Activated CD4-positive, alpha-beta memory T cell treated with anti-CD3 and anti-CD28 coated beads for 36 hours (primary cell): ENCODE measurements at regions of chr19 and their contacts with region 1.

Region 1: GRCh38 chr19:12400633-12401502 is at the start of gene ZNF799:
- DNase-seq: peak; percentile 93
- H3K4me3 Mint-ChIP-seq: peak within 1 kb of the TSS; percentile 90
- H3K27ac Mint-ChIP-seq: peak within 1 kb of the TSS; percentile 76
- H3K4me1 Mint-ChIP-seq: peaks cover 8% of the 10 kb centered on the region
- H3K27me3 Mint-ChIP-seq: no peaks in the 10 kb centered on the region
- total RNA-seq, gene ZNF799: 4.2 to 4.7 TPM

Region 2: DNA sequence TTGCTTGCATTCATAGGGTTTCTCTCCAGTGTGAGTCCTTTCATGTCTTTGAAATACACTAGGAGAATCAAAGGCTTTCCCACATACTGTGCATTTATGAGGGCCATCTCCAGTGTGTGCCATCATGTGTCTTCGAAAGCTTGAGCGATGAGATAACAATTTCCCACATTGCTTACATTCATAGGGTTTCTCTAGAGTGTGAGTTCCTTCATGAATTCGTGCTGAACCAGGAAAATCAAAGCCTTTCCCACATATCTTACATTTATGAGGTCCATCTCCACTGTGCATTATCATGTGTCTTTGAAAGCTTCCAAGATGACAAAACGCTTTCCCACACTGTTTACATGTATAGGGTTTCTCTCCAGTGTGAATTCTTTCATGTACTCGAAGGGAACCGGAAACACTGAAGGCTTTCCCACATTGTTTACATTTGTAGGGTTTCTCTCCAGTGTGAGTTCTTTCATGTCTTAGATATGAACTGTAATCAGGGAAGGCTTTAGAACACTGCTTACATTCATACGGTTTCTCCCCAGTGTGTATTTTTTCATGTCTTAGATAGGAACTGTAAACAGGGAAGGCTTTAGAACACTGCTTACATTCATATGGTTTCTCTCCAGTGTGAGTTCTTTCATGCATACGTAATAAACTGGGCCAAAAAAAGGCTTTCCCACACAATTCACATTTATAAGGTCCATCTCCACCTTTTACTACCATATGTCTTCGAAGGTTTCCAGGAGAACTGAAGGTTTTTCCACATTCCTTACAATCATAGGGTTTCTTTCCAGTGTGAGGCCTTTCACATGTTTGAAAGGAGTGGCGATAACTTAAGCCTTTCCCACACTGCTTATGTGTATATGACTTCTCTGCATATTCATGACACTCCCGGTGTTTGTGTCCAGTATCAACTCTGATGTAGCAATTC is 127.6 kb before region 1 on chr19:
- CTCF ChIA-PET with region 1: no interaction called
- POLR2A ChIA-PET with region 1: no interaction called
- intact Hi-C with region 1: no loop called
- DNase-seq: no peak
- H3K4me3 Mint-ChIP-seq: no peak overlapping the region
- H3K27ac Mint-ChIP-seq: no peak overlapping the region
- H3K4me1 Mint-ChIP-seq: peaks cover 4% of the 10 kb centered on the region
- H3K27me3 Mint-ChIP-seq: no peaks in the 10 kb centered on the region

Region 3: GRCh38 chr19:12294249-12295158 is 106.4 kb before region 1 on chr19 and contains the start of gene ZNF44:
- CTCF ChIA-PET with region 1: no interaction called
- POLR2A ChIA-PET with region 1: no interaction called
- intact Hi-C with region 1: loop called (anchors 1 kb)
- DNase-seq: peak; percentile 99
- H3K4me3 Mint-ChIP-seq: peak within 1 kb of the TSS; percentile 98
- H3K27ac Mint-ChIP-seq: peak within 1 kb of the TSS; percentile 98
- H3K4me1 Mint-ChIP-seq: peaks cover 27% of the 10 kb centered on the region
- H3K27me3 Mint-ChIP-seq: no peaks in the 10 kb centered on the region
- total RNA-seq, gene ZNF44: 7.5 to 8.9 TPM

Region 4: GRCh38 chr19:12365236-12366162 is 35.4 kb before region 1 on chr19 and contains the start of gene ZNF442:
- CTCF ChIA-PET with region 1: no interaction called
- POLR2A ChIA-PET with region 1: no interaction called
- intact Hi-C with region 1: loop called (anchors 1 kb)
- DNase-seq: peak; percentile 93
- H3K4me3 Mint-ChIP-seq: peak within 1 kb of the TSS; percentile 93
- H3K27ac Mint-ChIP-seq: peak within 1 kb of the TSS; percentile 65
- H3K4me1 Mint-ChIP-seq: peaks cover 16% of the 10 kb centered on the region
- H3K27me3 Mint-ChIP-seq: peaks cover 2% of the 10 kb centered on the region
- total RNA-seq, gene ZNF442: 2.3 TPM

Region 5: DNA sequence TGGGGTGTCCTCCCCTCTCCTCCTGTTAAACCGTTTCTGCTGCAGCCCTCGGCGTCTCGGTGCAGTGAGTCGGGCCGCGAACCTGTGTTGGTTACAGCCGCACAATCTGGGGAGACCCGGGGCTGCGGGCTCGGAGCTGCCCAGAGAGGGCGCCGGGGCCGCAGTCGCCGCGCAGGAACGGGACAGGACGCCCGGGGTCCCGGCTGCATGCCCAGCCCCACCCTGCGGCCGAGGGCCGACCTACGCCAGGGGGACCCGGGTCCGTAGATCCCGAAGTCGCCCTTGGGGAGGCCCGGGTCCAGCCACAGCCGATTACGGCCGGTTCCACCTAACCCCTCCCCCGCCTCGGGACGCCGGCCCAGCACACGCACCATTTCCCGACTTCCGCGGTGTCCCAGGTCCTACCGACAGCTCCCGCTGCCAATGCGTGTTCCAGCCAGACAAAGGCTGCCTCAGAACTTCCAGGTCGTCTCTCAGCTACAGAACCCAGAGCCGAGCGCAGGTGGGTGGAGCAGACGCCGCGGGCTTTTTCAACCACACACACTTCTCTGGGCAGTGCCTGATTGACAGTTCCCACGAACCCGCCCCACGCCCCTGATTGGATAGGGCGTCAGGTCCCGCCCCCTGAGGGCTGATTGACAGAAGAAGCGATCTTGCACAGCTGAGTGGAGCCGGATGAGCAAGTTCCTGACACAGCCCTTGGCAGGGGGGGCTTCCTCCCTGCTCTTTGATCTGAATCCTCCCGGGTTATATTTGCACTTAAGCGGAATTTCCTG is 39.9 kb after region 1 on chr19 and contains the start of gene ZNF443:
- CTCF ChIA-PET with region 1: interaction called, 4 read pairs
- POLR2A ChIA-PET with region 1: interaction called, 4 read pairs
- intact Hi-C with region 1: loop called (anchors 2 kb)
- DNase-seq: peak; percentile 100
- H3K4me3 Mint-ChIP-seq: peak within 1 kb of the TSS; percentile 97
- H3K27ac Mint-ChIP-seq: peak within 1 kb of the TSS; percentile 92
- H3K4me1 Mint-ChIP-seq: peaks cover 11% of the 10 kb centered on the region
- H3K27me3 Mint-ChIP-seq: no peaks in the 10 kb centered on the region
- total RNA-seq, gene ZNF443: 5.1 to 5.3 TPM

Region 6: GRCh38 chr19:12465211-12465610 is 64.3 kb after region 1 on chr19:
- CTCF ChIA-PET with region 1: no interaction called
- POLR2A ChIA-PET with region 1: no interaction called
- intact Hi-C with region 1: no loop called
- DNase-seq: no peak
- H3K4me3 Mint-ChIP-seq: no peak overlapping the region
- H3K27ac Mint-ChIP-seq: no peak overlapping the region
- H3K4me1 Mint-ChIP-seq: no peaks in the 10 kb centered on the region
- H3K27me3 Mint-ChIP-seq: no peaks in the 10 kb centered on the region